Activated T-helper 2 cell treated with anti-CD3 and anti-CD28 coated beads, Interferon-gamma antibody, Interleukin-2, Interleukin-4, amounts not matched to agents 10 μg/mL and 5 μg/mL and 100 μg/mL, durations not matched to agents 14 hours and 24 hours and 36 hours (primary cell): ENCODE measurements at regions of chr1 and their contacts with region 1.

Region 1: DNA sequence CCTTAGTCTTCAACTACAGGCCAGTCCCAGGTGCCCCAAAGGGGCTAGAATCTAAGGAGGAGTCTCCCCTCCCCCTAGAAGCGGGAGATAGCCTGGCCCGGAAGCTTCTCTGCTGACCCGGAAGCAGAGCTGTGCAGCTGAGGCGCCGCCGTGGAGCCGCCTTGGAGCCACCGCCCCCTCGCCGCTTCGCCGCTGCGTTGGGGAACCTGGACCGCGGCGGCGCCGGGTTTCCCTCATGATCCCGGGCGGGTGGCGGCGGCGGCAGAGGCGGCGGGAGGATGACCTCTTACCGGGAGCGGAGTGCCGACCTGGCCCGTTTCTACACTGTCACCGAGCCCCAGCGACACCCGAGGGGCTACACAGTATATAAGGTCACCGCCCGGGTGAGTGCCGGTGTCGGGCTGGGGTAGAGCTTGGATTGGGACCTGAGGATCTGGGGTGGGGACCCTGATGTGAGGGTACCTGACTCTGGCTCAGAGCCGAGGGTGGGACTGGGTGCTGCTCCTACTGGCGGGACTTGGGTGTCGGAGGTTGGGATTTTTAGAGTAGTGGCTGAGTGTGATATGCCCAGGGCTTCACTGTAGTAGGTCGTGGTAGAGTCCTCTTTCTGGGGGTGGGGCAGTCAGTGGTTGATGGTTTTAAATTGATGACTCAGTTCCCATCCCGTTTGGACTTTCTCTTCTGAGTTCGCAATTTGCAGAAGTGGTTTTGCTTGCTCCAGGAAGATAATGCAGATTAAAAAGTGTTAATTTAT is at the start of gene RPS6KC1:
- DNase-seq: peak; percentile 72
- H3K4me3 Mint-ChIP-seq: peak within 1 kb of the TSS; percentile 93
- H3K27ac Mint-ChIP-seq: peak within 1 kb of the TSS; percentile 89
- H3K4me1 Mint-ChIP-seq: peaks cover 31% of the 10 kb centered on the region
- H3K27me3 Mint-ChIP-seq: peaks cover 12% of the 10 kb centered on the region
- total RNA-seq, gene RPS6KC1: 7.2 and 7.3 TPM in 2 replicates

Region 2: DNA sequence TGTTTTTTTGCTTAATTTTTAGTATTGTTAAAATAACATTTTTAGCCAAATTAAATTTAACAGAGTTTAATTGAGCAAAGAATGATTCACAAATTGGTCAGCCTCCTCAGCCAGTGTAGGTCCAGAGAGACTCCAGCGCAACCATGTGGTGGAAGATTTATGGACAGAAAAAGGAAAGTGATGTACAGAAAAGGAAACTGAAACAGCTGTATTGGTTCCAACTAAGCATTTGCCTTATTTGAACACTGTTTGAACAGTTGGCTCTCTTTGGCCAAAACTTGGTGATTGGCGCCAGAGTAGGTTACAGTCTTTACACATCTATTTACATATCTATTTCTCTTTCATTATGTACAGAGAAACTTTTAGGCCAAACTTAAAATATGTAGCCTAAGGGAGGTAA is 19.1 kb after region 1 on chr1:
- intact Hi-C with region 1: loop called (anchors 2 kb)
- DNase-seq: no peak
- H3K4me3 Mint-ChIP-seq: no peak overlapping the region
- H3K27ac Mint-ChIP-seq: no peak overlapping the region
- H3K4me1 Mint-ChIP-seq: peaks cover 19% of the 10 kb centered on the region
- H3K27me3 Mint-ChIP-seq: no peaks in the 10 kb centered on the region